Cardiac septum (tissue), 1 donor: ENCODE measurements at regions of chr15 and their contacts with region 1.

Region 1: GRCh38 chr15:74768771-74769342 is 13.0 kb upstream of the CSK start:
- DNase-seq: peak; percentile 88

Region 2: DNA sequence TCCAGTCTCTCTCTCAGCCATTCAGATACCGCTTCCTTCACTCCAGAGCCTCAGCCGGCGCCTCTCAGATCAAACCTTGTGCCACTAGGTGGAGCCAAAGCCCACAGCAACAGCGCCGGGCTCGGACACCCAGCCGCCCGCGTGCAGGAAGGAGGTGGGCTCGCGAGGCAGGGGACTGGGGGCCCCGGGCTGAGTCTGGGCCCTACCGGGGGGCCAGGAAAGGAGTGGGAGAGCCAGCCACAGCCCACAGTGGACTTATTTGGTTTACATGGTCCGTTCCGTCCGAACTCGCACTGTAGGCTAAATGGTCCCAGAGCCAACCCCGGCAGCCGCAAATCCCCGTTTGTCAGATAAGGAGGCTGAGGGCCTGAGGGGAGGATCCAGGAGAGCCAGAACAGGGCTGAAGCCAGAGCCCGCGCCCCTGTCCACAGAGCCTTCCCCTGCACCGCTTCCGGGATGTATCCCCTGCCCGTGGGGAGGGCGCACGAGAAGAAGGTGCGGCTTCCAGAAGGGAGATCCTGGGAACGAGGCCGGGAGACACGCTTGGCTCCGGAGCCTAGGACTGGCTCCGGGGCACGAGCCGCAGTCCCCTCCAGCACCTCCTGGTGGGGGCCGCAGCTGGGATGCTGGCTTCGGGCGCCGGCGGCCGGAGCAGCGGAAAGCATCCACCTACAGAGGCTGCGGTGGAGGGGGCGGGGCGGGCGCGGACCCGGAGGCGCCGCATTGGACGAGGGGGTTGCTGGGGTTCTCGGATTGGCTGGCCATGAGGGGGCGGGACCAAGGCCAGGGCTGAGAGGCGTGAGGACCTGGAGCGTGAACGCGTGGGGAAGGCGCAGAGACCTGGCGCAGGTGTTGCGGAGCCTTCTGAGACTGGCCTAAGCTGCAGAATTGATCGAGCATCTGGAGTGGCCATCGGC is 394.9 kb before region 1 on chr15:
- intact Hi-C with region 1: loop called (anchors 5 kb)
- DNase-seq: peak; percentile 95

Region 3: DNA sequence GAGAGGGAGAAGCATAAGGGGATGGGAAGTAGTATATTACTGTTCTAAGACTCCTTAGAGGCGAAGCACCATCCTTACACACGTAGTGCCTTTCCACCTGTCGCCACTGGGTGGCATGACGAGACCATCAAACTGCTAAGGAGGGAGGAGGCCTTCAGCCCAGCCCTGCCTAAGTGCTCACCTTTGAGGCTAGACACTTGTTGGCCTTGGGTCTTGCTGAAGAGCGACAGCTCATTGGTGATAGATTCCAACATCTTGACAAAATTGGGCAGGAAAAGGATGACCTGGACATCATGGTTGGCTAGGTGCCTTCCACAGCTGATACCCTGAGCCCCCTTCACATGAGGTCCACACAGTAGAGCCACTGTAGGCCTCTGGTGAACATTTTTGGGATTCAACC is 133.6 kb before region 1 on chr15:
- intact Hi-C with region 1: loop called (anchors 1 kb)
- DNase-seq: no peak

Region 4: DNA sequence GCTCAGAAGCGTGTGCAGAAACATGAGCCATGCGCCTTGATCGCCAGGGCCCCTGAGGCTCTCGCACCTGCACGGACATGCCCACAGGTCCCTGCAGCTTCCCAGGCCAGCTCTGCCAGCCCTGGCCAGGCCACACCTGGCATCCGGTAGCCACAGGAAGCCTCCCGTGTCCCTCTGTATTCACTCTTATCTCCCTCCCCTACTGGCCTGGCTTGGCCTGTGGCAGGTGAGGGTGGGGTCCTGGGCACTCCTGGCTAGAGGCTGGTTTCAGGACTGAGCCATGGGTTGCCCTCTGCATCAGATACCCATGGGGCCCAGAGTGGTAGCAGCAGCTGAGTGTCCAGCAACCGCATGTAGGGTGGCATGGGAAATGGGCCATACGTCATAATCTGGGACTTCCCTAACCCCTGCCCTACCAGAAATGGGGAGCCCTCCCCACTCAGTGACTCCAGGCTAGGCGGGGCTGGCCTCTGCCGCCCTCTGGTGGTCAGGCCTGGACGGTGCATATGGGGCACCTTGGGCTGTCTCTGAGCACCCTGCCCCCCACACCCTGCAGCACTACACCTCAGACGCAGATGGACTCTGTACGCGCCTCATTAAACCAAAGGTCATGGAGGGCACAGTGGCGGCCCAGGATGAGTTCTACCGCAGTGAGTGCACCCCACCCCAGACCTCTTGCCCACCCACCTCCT is 31.1 kb after region 1 on chr15:
- intact Hi-C with region 1: loop called (anchors 1 kb)
- DNase-seq: peak; percentile 93

Region 5: GRCh38 chr15:74835307-74835823 is 66.5 kb after region 1 on chr15:
- intact Hi-C with region 1: loop called (anchors 5 kb)
- DNase-seq: no peak

Region 6: DNA sequence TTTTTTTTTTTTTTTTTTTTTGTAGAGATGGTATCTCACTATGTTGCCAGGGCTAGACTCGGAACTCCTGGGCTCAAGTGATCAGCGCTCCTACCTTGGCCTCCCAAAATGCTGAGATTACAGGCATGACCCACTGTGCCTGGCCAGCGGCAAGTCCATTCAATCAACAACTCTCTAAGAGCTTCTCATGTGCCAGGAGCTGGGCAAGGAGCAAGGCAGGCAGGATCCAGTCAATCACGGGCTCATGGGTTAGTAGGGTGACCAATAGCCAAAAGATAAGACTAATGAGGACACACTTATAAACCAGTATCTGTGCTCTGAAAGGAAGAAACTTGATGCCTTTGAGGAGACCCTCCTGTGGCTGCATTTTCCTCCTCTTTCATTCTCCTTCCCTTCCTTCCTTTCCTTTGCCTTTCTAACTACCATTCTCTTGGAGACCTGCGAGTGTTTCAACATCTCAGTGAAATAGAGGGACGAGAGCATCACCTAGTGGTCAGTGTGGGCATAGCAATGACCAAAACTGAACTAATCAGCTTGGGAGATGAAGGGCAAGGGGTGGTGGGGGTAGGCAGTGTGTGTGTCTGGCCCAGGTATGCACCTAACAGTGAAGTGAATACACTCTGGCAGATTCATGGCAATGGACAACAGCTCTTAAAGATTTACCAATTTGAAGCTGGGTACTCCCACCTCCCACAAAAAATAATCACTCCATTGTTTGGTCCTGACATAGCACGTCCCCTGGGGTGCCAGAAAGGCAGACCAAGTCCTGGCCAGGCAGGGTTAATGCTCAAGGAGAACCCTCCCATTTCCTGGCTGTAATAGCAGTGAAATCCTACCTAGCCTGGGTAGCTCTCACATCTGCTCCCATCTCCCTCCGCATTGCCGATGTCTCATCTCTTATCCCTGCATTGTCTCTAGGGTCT is 181.5 kb after region 1 on chr15:
- intact Hi-C with region 1: loop called (anchors 2 kb)
- DNase-seq: no peak